Right ventricle myocardium inferior (tissue), 1 donor: ENCODE measurements at regions of chr6 and their contacts with region 1.

Region 1: GRCh38 chr6:47477497-47478232 is at the start of gene CD2AP:
- DNase-seq: peak; percentile 91
- ATAC-seq: peak; percentile 97
- total RNA-seq, gene CD2AP: 10.0 TPM

Region 2: DNA sequence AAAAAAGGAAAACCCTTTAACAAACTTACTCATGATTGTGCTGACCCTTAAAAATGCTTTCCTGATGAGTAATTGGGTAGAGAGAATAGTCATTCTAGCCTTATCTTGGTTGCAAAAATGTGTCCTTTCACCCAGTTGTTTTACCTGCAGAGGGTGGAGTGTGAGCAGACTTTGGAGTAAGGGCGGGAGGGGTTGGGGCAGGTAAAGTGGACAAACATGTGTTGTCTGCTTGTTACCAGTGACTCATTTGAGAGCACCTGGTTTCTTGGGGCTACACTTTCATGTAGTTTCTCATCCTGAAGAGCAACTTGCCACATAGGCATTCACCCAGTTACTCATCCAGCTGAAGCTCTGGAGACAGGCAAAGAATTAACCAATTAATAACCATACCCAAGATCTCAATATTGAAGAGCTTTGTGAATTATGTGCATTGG is 289.1 kb before region 1 on chr6:
- intact Hi-C with region 1: no loop called
- DNase-seq: no peak
- ATAC-seq: no peak

Region 3: DNA sequence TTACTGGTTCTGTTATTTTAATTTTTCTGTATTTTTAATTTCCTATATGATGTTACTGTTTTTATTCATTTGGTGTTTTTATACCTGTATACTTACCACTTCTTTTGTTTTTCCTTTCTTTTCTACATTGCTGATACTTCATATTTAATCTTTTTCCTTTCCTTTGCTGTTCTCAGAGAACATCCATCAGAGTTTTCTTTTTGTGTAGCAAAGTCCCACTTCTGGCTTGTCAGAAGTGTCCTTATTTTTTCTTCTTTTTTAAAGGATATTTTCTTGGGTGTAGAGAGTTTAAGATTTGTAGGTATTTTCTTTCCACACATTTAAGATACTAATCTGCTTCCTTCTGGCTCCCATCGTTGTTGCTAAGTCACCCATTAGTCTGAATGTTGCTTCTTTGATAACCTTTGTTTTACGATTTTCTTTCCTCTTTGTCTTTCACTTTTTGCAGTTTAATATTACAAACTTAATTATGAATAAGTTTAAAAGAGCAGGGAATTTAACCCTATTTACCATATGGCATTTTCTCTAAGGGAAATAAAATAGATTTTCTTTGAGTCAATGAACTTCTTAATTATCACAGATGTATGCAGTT is 18.4 kb after region 1 on chr6:
- intact Hi-C with region 1: loop called (anchors 2 kb)
- DNase-seq: no peak
- ATAC-seq: no peak

Region 4: DNA sequence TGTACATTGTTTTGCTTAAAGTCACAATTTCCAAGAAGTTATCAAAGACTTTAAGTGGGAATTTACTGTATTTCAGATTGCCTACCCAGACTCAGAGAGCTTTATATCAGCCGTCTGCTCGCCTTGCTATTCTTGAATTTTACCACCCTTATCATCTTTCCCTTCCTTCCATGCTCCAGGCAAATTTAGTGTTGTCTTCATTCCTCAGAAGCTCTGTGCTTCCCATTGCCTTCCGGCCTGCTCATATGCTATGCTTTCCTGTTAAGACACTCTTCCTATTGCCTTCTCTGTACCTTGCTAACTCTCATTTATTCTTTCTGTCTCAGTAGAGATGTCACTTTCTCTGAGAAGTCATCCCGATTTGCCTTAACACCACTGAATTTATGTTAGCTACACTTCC is 52.1 kb after region 1 on chr6:
- intact Hi-C with region 1: loop called (anchors 5 kb)
- DNase-seq: no peak
- ATAC-seq: no peak

Region 5: GRCh38 chr6:47603995-47604394 is 126.3 kb after region 1 on chr6:
- intact Hi-C with region 1: loop called (anchors 5 kb)
- DNase-seq: no peak
- ATAC-seq: no peak